ENCODE measurements at regions of chr2 and their contacts with region 1.

Region 1: GRCh38 chr2:127486247-127487058 is 39.8 kb downstream of the IWS1 start:
- DNase-seq: peak; percentile 12 to 29 (median 25)
- H3K4me3 ChIP-seq: no peak overlapping the region
- H3K4me3 Mint-ChIP-seq: no peak overlapping the region
- H3K27ac ChIP-seq: peak overlapping the region; percentile 19 to 76
- H3K27ac Mint-ChIP-seq: peak overlapping the region; percentile 46 to 85 (median 61)
- H3K4me1 ChIP-seq: peaks cover 18 to 28% of the 10 kb centered on the region in 2 donors
- H3K4me1 Mint-ChIP-seq: peaks cover 31% of the 10 kb centered on the region
- H3K27me3 ChIP-seq: no peaks in the 10 kb centered on the region
- H3K27me3 Mint-ChIP-seq: peaks cover 0 to 1% (median 0%) of the 10 kb centered on the region in 3 donors
- CTCF ChIP-seq: no peak

Region 2: GRCh38 chr2:126558029-126558428 is 928.4 kb before region 1 on chr2:
- intact Hi-C with region 1: no loop called
- DNase-seq: no peak
- H3K4me3 ChIP-seq: no peak overlapping the region
- H3K4me3 Mint-ChIP-seq: no peak overlapping the region
- H3K27ac ChIP-seq: no peak overlapping the region
- H3K27ac Mint-ChIP-seq: peak overlapping the region in 1 of 7 donors; percentile 48
- H3K4me1 ChIP-seq: no peaks in the 10 kb centered on the region
- H3K4me1 Mint-ChIP-seq: no peaks in the 10 kb centered on the region
- H3K27me3 ChIP-seq: no peaks in the 10 kb centered on the region
- H3K27me3 Mint-ChIP-seq: peaks cover 0 to 2% (median 0%) of the 10 kb centered on the region in 3 donors
- CTCF ChIP-seq: no peak

Region 3: GRCh38 chr2:127324635-127325034 is 161.8 kb before region 1 on chr2:
- intact Hi-C with region 1: loop called in 1 of 2 experiments (anchors 10 kb)
- DNase-seq: no peak
- H3K4me3 ChIP-seq: no peak overlapping the region
- H3K4me3 Mint-ChIP-seq: no peak overlapping the region
- H3K27ac ChIP-seq: no peak overlapping the region
- H3K27ac Mint-ChIP-seq: no peak overlapping the region
- H3K4me1 ChIP-seq: no peaks in the 10 kb centered on the region
- H3K4me1 Mint-ChIP-seq: no peaks in the 10 kb centered on the region
- H3K27me3 ChIP-seq: no peaks in the 10 kb centered on the region
- H3K27me3 Mint-ChIP-seq: no peaks in the 10 kb centered on the region
- CTCF ChIP-seq: peak; percentile 59

Region 4: DNA sequence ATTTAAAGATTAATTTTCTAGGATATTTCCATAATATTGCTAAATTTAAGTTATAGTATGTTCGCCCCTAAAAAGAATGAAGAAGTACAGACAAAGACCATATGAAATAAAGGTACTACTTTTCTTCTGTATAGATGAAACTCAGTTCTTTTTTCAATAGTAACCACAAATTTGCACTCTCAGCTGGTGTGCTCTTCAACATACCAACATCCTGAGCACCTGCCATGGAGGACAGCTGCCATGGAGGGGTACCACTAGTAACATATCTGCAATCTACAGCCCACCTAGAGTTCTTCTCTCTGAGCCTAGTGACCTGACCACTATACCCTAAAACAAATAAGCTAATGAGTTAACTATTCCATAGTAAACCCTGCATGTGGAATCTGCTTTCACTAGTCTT is 155.7 kb before region 1 on chr2:
- intact Hi-C with region 1: loop called (anchors 10 kb)
- DNase-seq: no peak
- H3K4me3 ChIP-seq: no peak overlapping the region
- H3K4me3 Mint-ChIP-seq: no peak overlapping the region
- H3K27ac ChIP-seq: no peak overlapping the region
- H3K27ac Mint-ChIP-seq: peak overlapping the region in 3 of 7 donors; percentile 11 to 68 (median 42)
- H3K4me1 ChIP-seq: no peaks in the 10 kb centered on the region
- H3K4me1 Mint-ChIP-seq: no peaks in the 10 kb centered on the region
- H3K27me3 ChIP-seq: no peaks in the 10 kb centered on the region
- H3K27me3 Mint-ChIP-seq: no peaks in the 10 kb centered on the region
- CTCF ChIP-seq: no peak

Region 5: GRCh38 chr2:127681288-127681804 is 194.9 kb after region 1 on chr2:
- intact Hi-C with region 1: no loop called
- DNase-seq: no peak
- H3K4me3 ChIP-seq: no peak overlapping the region
- H3K4me3 Mint-ChIP-seq: peak overlapping the region; percentile 64 to 77
- H3K27ac ChIP-seq: no peak overlapping the region
- H3K27ac Mint-ChIP-seq: peak overlapping the region in 1 of 7 donors; percentile 37
- H3K4me1 ChIP-seq: no peaks in the 10 kb centered on the region
- H3K4me1 Mint-ChIP-seq: peaks cover 10% of the 10 kb centered on the region
- H3K27me3 ChIP-seq: peaks cover 8 to 34% of the 10 kb centered on the region in 2 donors
- H3K27me3 Mint-ChIP-seq: peaks cover 33 to 47% (median 33%) of the 10 kb centered on the region in 3 donors
- CTCF ChIP-seq: no peak